Left ventricle myocardium inferior (tissue), 1 donor: ENCODE measurements at regions of chr2 and their contacts with region 1.

Region 1: DNA sequence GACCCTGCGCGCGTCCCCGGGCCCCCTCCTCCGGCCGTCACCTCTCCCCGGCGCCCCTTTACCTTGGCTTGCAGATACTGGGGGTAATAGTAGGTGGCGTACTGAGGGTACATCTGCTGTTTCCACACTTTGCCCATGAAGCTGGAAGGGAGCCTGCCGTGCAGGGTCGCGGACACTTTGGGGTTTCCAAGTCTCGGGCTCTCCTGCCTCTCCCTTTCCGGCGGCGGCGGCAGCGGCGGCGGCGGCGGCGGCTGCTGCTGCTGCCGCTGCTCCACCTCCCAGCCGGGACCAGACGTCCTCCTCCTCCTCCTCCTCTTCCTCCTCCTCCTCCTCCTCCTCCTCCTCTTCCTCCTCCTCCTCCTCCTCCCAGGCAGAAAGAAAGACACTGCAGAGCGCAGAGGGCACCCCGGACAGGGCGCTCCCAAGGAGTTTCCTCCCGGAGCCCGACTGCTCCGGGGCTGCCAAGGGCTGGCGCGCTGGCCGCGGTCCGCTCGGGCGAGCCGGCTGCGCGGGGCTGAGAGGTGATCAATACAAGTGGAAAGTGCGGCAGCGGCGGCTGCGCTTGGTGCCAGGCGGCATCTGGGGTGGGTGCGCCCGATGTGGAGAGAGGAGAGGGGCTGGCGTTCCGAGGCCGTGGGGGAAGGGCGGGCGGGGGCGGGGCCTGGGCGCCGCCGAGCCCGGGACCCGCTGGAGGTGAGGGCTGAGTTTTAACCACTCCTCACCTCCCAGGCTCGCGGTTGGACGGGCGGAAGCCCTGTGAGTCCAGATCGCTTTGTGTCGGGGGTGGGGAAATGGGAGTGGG is at the start of gene RBMS1:
- DNase-seq: peak; percentile 66
- H3K4me3 ChIP-seq: peak within 1 kb of the TSS; percentile 95
- H3K27ac ChIP-seq: peak within 1 kb of the TSS; percentile 98
- H3K4me1 ChIP-seq: peaks cover 54% of the 10 kb centered on the region
- H3K27me3 ChIP-seq: no peaks in the 10 kb centered on the region
- CTCF ChIP-seq: no peak
- total RNA-seq, gene RBMS1: 56.2 TPM

Region 2: GRCh38 chr2:160324161-160324800 is 169.1 kb before region 1 on chr2:
- intact Hi-C with region 1: loop called (anchors 10 kb)
- DNase-seq: peak; percentile 53
- H3K4me3 ChIP-seq: no peak overlapping the region
- H3K27ac ChIP-seq: peak overlapping the region; percentile 57
- H3K4me1 ChIP-seq: peaks cover 100% of the 10 kb centered on the region
- H3K27me3 ChIP-seq: no peaks in the 10 kb centered on the region
- CTCF ChIP-seq: peak; percentile 85